ENCODE measurements at regions of chr1 and their contacts with region 1.

Region 1: GRCh38 chr1:204828338-204828850 is 42.3 kb upstream of the NFASC start:
- DNase-seq: peak; percentile 52 to 77
- H3K4me3 ChIP-seq: peak overlapping the region; percentile 25
- H3K4me3 Mint-ChIP-seq: no peak overlapping the region
- H3K27ac Mint-ChIP-seq: no peak overlapping the region
- H3K4me1 ChIP-seq: no peaks in the 10 kb centered on the region
- H3K4me1 Mint-ChIP-seq: no peaks in the 10 kb centered on the region
- H3K27me3 ChIP-seq: peaks cover 1% of the 10 kb centered on the region; the same call in 1 of the 2 replicates
- H3K27me3 Mint-ChIP-seq: peaks cover 18% of the 10 kb centered on the region
- CTCF ChIP-seq: no peak

Region 2: GRCh38 chr1:204950353-204951001 is 122.1 kb after region 1 on chr1:
- CTCF ChIA-PET with region 1: no interaction called
- POLR2A ChIA-PET with region 1: no interaction called
- intact Hi-C with region 1: no loop called
- DNase-seq: no peak
- H3K4me3 ChIP-seq: no peak overlapping the region
- H3K4me3 Mint-ChIP-seq: no peak overlapping the region
- H3K27ac Mint-ChIP-seq: no peak overlapping the region
- H3K4me1 ChIP-seq: no peaks in the 10 kb centered on the region
- H3K4me1 Mint-ChIP-seq: no peaks in the 10 kb centered on the region
- H3K27me3 ChIP-seq: no peaks in the 10 kb centered on the region
- H3K27me3 Mint-ChIP-seq: peaks cover 13% of the 10 kb centered on the region
- CTCF ChIP-seq: no peak

Region 3: DNA sequence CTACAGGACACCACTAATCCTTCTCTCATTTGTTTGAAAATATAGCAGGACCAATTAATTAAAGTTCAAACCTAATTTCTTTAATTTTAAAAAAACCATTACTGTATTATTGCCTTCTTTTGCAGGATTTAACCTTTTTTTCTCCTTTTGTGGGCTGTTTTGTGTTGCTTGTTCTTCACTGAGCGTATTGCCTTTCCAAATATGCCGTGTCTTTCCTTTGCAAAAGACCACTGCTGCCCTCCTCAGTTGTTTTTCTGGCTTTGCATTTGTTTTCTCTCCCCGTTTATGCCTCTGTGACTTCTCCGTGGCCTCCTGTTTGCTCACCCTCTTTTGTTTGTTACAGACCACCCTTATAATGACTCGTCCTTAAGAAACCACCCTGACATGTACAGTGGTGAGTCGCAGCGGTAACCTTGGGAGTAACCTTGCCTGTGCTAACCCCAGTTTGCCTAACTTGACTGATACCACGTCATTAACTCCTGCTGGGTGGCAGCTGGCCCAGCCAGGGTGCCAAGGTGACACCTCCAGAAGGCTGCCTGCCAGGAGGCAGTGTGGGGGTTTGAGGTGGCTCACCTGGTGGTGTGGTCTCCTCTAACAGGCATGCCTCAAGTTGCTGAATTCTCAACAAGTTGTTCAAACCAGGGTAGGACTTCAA is 133.5 kb after region 1 on chr1:
- CTCF ChIA-PET with region 1: no interaction called
- POLR2A ChIA-PET with region 1: no interaction called
- intact Hi-C with region 1: loop called (anchors 5 kb)
- DNase-seq: no peak
- H3K4me3 ChIP-seq: no peak overlapping the region
- H3K4me3 Mint-ChIP-seq: no peak overlapping the region
- H3K27ac Mint-ChIP-seq: no peak overlapping the region
- H3K4me1 ChIP-seq: no peaks in the 10 kb centered on the region
- H3K4me1 Mint-ChIP-seq: no peaks in the 10 kb centered on the region
- H3K27me3 ChIP-seq: peaks cover 1% of the 10 kb centered on the region
- H3K27me3 Mint-ChIP-seq: peaks cover 21% of the 10 kb centered on the region
- CTCF ChIP-seq: no peak